ENCODE measurements at regions of chr7 and their contacts with region 1.

Region 1: GRCh38 chr7:7347045-7347444 is 164.7 kb downstream of the C1GALT1 start:
- DNase-seq: no peak
- H3K4me3 ChIP-seq: no peak overlapping the region
- H3K27ac ChIP-seq: no peak overlapping the region
- H3K4me1 ChIP-seq: no peaks in the 10 kb centered on the region
- H3K27me3 ChIP-seq: no peaks in the 10 kb centered on the region
- CTCF ChIP-seq: no peak

Region 2: DNA sequence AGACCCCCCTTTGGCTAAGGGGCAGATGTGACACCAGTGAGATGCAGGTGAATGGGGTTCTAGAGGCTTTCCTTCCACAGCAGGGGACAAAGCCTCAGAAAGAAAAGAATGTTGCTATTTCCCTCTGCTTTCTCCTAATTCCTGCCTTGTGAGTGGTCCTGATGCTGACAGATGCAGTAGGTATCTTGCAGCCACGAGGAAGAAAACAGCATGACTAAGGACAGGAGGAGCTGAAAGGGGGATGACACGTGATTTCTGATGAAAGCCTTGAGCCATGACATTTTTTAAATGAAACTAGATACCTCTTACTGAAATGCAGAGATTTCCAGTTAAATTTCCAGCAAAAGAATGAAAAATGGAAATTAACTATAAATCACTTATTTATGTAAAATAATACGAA is 72.3 kb before region 1 on chr7:
- CTCF ChIA-PET with region 1: no interaction called
- dilution Hi-C with region 1: loop called (anchors 5 kb)
- in situ Hi-C with region 1: no loop called
- intact Hi-C with region 1: no loop called
- DNase-seq: peak; percentile 17
- H3K4me3 ChIP-seq: no peak overlapping the region
- H3K27ac ChIP-seq: no peak overlapping the region
- H3K4me1 ChIP-seq: no peaks in the 10 kb centered on the region
- H3K27me3 ChIP-seq: no peaks in the 10 kb centered on the region
- CTCF ChIP-seq: no peak